CD4-positive, alpha-beta memory T cell (primary cell): ENCODE measurements at regions of chr10 and their contacts with region 1.

Region 1: DNA sequence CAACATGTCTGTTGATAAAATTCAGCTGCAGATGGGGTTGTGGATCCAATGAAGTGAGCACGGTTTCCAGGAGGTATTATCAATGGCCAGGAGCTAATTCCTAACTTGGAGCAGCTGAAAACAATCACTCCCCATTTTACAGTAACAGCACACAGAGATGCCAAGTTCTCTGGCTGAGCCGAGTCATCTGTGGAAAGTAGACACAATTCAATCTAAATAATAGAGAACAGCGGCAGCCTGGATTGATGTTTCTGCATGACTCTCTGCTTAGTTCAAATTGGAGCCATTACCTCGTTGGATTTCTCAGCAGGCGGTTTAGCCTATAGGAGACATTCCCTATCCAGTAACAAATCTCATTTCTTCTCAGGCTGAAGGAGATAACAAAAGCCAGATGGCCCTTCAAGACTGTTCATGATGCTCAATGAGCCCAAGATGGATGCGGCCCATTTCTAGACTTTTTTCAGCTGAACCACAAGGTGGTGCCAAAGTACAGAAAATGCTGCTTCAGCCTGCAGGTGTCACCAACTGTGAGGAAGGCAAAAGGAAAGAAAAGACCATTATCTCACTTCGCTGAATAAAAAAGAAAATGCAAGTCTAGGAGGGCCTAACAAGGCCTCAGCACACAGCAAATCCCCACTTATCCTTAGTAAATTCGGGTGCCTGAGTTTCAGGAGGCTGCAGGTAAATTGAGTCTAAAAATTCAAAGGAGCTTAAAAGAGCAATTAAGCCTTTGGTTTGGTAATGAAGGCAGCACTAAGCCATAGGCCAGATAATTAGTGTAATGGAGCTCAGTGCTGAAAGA is 83.7 kb downstream of the SLC16A9 start:
- DNase-seq: peak; percentile 48 to 66 (median 61)
- H3K4me3 ChIP-seq: no peak overlapping the region
- H3K4me3 Mint-ChIP-seq: no peak overlapping the region
- H3K27ac ChIP-seq: no peak overlapping the region
- H3K27ac Mint-ChIP-seq: peak overlapping the region in 1 of 7 donors; percentile 3
- H3K4me1 ChIP-seq: no peaks in the 10 kb centered on the region
- H3K4me1 Mint-ChIP-seq: peaks cover 0 to 4% (median 2%) of the 10 kb centered on the region in 4 donors
- H3K27me3 ChIP-seq: no peaks in the 10 kb centered on the region
- H3K27me3 Mint-ChIP-seq: peaks cover 1 to 4% of the 10 kb centered on the region in 2 donors

Region 2: GRCh38 chr10:58781873-58782488 is 843.9 kb before region 1 on chr10:
- CTCF ChIA-PET with region 1: no interaction called
- POLR2A ChIA-PET with region 1: no interaction called
- intact Hi-C with region 1: loop called (anchors 2 kb)
- DNase-seq: peak in 2 of 5 donors; percentile 2 to 20
- H3K4me3 ChIP-seq: no peak overlapping the region
- H3K4me3 Mint-ChIP-seq: no peak overlapping the region
- H3K27ac ChIP-seq: no peak overlapping the region
- H3K27ac Mint-ChIP-seq: no peak overlapping the region
- H3K4me1 ChIP-seq: no peaks in the 10 kb centered on the region
- H3K4me1 Mint-ChIP-seq: no peaks in the 10 kb centered on the region
- H3K27me3 ChIP-seq: no peaks in the 10 kb centered on the region
- H3K27me3 Mint-ChIP-seq: peaks cover 0 to 7% of the 10 kb centered on the region in 2 donors

Region 3: DNA sequence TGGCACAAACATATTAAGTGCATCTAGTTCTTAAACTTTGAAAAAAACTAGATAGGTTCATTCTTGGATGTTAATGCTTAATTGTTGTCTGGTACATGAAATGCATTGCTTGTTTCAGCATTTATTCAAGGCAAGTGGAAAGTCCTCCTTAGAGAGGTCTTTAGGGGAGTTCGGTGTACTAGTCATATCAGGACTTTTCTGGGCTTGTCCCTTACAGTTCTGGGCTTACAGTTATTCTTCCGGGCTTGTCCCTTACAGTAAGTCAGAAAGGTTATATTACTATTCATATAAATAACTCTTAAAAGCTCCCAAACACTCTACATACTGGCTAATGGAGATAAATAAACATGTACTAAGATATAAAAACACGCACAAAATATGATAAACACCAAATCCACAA is 189.0 kb after region 1 on chr10:
- CTCF ChIA-PET with region 1: no interaction called
- POLR2A ChIA-PET with region 1: no interaction called
- intact Hi-C with region 1: loop called (anchors 5 kb)
- DNase-seq: no peak
- H3K4me3 ChIP-seq: no peak overlapping the region
- H3K4me3 Mint-ChIP-seq: no peak overlapping the region
- H3K27ac ChIP-seq: no peak overlapping the region
- H3K27ac Mint-ChIP-seq: peak overlapping the region in 1 of 7 donors; percentile 7
- H3K4me1 ChIP-seq: peaks cover 9% of the 10 kb centered on the region
- H3K4me1 Mint-ChIP-seq: peaks cover 10 to 30% (median 16%) of the 10 kb centered on the region in 4 donors
- H3K27me3 ChIP-seq: no peaks in the 10 kb centered on the region
- H3K27me3 Mint-ChIP-seq: no peaks in the 10 kb centered on the region

Region 4: DNA sequence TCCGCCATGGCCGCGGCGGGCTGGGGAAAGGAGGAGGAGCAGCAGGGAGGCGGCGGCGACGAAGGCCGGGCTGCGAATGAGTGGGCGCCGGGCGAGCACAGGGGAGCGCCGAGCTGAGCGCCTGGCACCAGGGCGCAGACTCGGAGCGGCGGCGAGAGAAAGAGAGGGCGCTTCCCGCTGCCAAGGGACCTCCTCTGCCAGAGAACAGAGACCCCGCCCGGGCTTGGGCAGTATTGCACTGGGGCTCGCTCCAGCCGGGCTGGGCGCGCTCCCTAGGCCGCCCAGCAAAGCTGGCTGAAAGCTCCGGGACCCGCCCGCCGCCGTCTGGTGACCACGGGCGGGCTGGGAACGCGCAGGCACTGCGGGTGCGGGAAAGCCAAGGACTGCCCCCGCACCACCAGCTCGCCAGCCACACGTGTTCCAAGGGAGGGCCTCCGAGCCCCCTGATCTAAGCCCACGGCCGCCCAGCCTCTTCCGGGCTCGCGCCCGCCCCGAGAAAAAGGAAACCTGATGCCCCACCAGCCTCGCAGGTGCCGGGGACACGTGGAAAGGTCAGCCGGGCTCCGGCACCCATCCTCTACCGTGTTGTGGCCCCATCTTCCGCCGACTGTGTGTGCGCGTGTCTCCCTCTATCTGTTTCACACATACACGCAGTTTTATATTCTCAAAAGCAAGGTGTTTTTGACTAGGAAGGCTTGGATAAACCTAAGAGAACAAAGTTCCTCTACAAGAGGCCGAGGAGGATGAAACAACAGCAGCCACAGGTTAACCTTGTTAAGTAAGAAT is 280.7 kb after region 1 on chr10 and contains the start of gene CCDC6:
- CTCF ChIA-PET with region 1: interaction called, 10 read pairs
- POLR2A ChIA-PET with region 1: no interaction called
- intact Hi-C with region 1: loop called (anchors 1 kb)
- DNase-seq: peak; percentile 91 to 93 (median 93)
- H3K4me3 ChIP-seq: peak within 1 kb of the TSS; percentile 80 to 81
- H3K4me3 Mint-ChIP-seq: peak within 1 kb of the TSS; percentile 93 to 98 (median 96)
- H3K27ac ChIP-seq: peak within 1 kb of the TSS; percentile 77
- H3K27ac Mint-ChIP-seq: peak within 1 kb of the TSS; percentile 89 to 99 (median 96)
- H3K4me1 ChIP-seq: peaks cover 56% of the 10 kb centered on the region
- H3K4me1 Mint-ChIP-seq: peaks cover 46 to 61% (median 57%) of the 10 kb centered on the region in 4 donors
- H3K27me3 ChIP-seq: no peaks in the 10 kb centered on the region
- H3K27me3 Mint-ChIP-seq: no peaks in the 10 kb centered on the region
- total RNA-seq, gene CCDC6: 20.9 to 22.5 TPM

Region 5: DNA sequence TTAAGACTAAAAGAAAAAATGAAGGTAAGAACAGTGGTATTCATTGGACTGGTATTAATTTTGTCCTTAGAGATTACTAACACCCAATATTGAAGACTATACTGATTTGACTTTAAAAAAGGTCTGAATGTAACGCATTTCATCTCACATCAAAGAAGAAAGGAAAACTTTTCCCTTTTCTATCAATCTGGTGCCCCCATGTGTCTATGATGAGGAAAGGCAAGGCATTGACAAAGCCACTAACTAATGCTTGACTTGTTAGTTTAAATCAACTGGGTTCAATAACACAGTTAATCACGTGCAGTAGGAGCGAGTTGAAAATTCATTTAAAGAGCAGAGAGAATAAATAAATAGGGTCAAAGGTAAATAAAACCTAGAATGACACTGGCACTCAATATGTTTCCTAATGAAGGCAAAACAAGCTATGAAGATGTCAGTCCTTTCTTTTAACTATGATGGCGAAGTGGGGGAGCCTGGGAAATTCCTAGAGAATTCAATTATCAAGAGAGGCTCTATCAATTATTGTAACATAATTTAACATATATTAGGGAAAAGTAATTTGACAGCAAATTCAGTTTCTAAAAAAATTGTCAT is 582.9 kb after region 1 on chr10:
- CTCF ChIA-PET with region 1: no interaction called
- POLR2A ChIA-PET with region 1: no interaction called
- intact Hi-C with region 1: loop called (anchors 10 kb)
- DNase-seq: no peak
- H3K4me3 ChIP-seq: no peak overlapping the region
- H3K4me3 Mint-ChIP-seq: no peak overlapping the region
- H3K27ac ChIP-seq: no peak overlapping the region
- H3K27ac Mint-ChIP-seq: no peak overlapping the region
- H3K4me1 ChIP-seq: peaks cover 18% of the 10 kb centered on the region
- H3K4me1 Mint-ChIP-seq: peaks cover 25 to 32% (median 26%) of the 10 kb centered on the region in 4 donors
- H3K27me3 ChIP-seq: no peaks in the 10 kb centered on the region
- H3K27me3 Mint-ChIP-seq: no peaks in the 10 kb centered on the region

Region 6: DNA sequence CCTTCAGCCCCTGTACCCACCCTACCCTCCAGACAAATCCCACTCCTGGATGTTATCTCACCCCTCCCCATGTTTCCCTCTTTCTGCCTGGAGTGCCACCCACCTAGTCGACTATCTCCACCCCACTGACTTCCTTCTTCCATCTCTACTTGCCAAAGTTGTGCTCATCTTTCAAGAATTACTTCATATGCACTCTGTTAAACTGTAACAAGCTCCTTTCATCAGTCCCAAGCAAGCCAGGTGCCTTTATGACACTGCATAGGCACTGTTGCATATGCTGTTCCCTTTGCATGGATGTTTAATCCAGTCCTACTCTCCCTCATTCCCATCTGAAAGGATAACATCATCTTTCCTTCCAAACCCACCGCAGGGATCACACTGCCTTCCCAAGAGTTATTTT is 1143.5 kb after region 1 on chr10:
- CTCF ChIA-PET with region 1: interaction called, 4 read pairs
- POLR2A ChIA-PET with region 1: no interaction called
- intact Hi-C with region 1: loop called (anchors 2 kb)
- DNase-seq: no peak
- H3K4me3 ChIP-seq: no peak overlapping the region
- H3K4me3 Mint-ChIP-seq: no peak overlapping the region
- H3K27ac ChIP-seq: no peak overlapping the region
- H3K27ac Mint-ChIP-seq: peak overlapping the region in 1 of 7 donors; percentile 5
- H3K4me1 ChIP-seq: peaks cover 10% of the 10 kb centered on the region
- H3K4me1 Mint-ChIP-seq: peaks cover 6 to 11% (median 8%) of the 10 kb centered on the region in 4 donors
- H3K27me3 ChIP-seq: no peaks in the 10 kb centered on the region
- H3K27me3 Mint-ChIP-seq: peaks cover 0 to 2% of the 10 kb centered on the region in 2 donors

Region 7: DNA sequence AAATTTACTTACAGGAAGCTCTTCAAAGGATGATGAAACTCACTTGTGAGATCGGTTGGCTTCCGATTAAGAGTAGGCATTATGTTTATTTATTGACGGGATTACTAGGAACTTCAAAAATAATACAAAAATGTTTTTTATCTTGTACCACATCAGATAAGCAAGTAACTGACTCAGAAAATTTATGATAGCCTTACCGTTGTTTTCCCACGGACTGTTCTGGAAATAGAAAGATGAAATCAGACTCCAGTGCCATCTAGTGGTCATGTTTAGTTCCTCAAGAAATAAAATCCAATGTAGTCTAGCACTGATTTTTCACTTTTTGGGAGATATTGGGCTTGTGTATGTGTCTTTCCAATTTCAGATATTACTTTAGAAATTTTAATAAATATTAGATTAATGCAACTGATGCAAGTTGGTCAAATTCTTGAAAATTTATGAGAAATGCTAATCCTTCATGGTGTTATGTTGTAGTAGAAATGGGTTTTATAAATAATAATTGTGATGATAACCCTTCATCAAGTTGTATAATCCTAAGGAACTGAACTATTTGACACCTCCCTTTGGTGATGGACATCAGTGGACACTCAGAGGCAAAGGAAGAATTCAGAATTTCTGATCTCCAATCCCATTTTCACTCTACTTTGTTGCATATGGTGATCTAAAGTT is 1658.4 kb after region 1 on chr10:
- CTCF ChIA-PET with region 1: no interaction called
- POLR2A ChIA-PET with region 1: no interaction called
- intact Hi-C with region 1: loop called (anchors 1 kb)
- DNase-seq: peak in 4 of 5 donors; percentile 23 to 42 (median 34)
- H3K4me3 ChIP-seq: no peak overlapping the region
- H3K4me3 Mint-ChIP-seq: peak overlapping the region; percentile 34 to 75 (median 70)
- H3K27ac ChIP-seq: no peak overlapping the region
- H3K27ac Mint-ChIP-seq: peak overlapping the region in 2 of 7 donors; percentile 15 to 31
- H3K4me1 ChIP-seq: peaks cover 19% of the 10 kb centered on the region
- H3K4me1 Mint-ChIP-seq: peaks cover 18 to 27% (median 22%) of the 10 kb centered on the region in 4 donors
- H3K27me3 ChIP-seq: no peaks in the 10 kb centered on the region
- H3K27me3 Mint-ChIP-seq: no peaks in the 10 kb centered on the region